ENCODE measurements at regions of chr5 and their contacts with region 1.

Region 1: DNA sequence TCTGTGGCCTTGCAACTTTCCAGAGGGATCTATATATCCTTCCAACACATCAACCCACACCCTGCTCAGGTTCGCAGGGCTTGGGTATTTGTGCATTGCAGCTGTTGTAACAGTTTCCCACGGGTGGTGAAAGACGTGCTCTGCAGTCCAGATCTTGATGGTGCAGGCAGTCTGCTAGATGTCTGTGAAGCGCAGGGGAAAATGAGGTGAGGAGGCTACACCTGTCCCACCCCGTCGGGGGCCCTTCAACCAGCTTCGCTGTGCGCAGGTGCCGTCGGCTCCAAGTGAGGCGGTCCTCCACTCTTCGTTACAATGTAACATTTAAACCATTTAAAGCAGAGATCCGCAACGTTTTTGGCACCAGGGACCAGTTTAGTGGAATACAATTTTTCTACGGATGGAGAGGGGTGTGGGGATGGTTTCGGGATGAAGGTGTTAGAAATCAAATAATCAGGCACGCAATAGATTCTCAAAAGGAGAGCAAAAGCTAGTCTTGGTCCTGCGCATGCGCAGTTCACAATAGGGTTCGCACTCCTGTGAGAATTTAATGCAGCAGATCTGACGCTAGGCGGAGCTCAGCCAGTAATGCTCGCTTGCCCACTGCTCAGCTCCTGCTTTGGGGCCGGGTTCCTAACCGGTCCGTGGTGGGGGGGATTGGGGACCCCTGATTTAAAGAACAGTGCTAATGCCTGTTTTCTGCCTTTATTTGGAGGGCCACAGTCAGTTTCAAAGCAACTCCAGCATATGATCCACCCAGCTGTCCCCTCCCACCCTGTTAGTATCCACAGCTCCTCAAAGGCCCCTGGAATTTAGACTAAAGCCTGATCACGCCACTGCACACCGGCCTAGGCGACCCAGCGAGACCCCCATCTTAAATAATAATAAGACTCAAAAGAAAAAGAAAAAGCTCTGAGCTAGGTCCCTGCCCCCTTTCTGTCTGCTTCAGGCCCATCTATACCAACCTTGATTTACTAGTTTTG is 97.1 kb upstream of the SELENOP start:
- DNase-seq: peak; percentile 87
- H3K4me3 ChIP-seq: peak overlapping the region; percentile 31 to 75 (median 41)
- H3K27ac ChIP-seq: no peak overlapping the region
- H3K4me1 ChIP-seq: peaks cover 5% of the 10 kb centered on the region
- H3K27me3 ChIP-seq: peaks cover 23 to 34% of the 10 kb centered on the region in 2 experiments
- CTCF ChIP-seq: peak; percentile 75 to 78
- POLR2A ChIP-seq: no peak

Region 2: GRCh38 chr5:42923710-42924109 is 14.9 kb after region 1 on chr5:
- CTCF ChIA-PET with region 1: interaction called, 10 read pairs
- POLR2A ChIA-PET with region 1: no interaction called
- dilution Hi-C with region 1: no loop called
- intact Hi-C with region 1: no loop called
- DNase-seq: no peak
- H3K4me3 ChIP-seq: no peak overlapping the region
- H3K27ac ChIP-seq: no peak overlapping the region
- H3K4me1 ChIP-seq: no peaks in the 10 kb centered on the region
- H3K27me3 ChIP-seq: peaks cover 2 to 4% of the 10 kb centered on the region in 2 experiments
- CTCF ChIP-seq: no peak
- POLR2A ChIP-seq: no peak

Region 3: GRCh38 chr5:42994246-42995151 is 85.7 kb after region 1 on chr5:
- CTCF ChIA-PET with region 1: interaction called, 175 read pairs
- POLR2A ChIA-PET with region 1: interaction called, 3 read pairs
- dilution Hi-C with region 1: no loop called
- intact Hi-C with region 1: loop called (anchors 1 kb)
- DNase-seq: peak; percentile 96
- H3K4me3 ChIP-seq: peak overlapping the region; percentile 59 to 94 (median 61)
- H3K27ac ChIP-seq: peak overlapping the region; percentile 98
- H3K4me1 ChIP-seq: peaks cover 30% of the 10 kb centered on the region
- H3K27me3 ChIP-seq: no peaks in the 10 kb centered on the region
- CTCF ChIP-seq: peak; percentile 85 to 86
- POLR2A ChIP-seq: peak; percentile 52

Region 4: DNA sequence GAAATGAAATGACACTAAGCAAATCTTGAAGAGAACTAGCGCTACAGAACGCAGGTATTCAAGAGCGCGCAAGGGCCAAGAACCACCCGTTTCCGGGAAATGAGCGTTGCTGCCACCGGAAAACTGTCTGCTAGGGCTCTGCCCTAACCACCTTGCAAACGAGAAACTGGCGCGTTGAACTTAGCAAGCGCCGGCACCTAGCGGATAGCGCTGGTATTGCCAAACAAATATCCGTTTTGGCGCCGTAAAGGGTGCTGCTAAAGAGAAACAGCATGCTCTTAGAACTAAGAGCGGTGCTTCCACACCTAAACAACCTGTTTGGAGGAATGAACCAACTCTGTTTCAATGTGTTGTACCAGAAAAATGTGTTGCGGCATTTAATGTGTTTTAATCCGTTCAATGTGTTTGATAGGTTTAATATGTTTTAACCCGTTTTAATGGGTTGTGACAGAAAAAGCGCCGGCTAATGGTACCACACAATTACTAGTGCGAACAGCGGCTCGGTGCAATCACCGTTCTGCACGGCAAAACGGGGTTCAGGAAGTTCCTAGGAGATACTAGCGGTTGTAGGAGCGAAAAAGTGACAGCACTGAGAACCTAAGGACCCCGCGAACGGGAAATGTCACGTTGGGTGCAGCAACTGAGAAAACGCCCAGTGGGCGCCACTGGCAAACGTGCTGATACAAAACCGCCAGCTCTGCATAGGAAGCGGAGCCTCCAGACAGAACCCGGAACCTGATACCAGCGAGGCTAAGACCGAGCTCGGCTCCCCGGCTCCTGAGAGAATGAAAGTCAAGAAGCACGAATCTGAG is 131.7 kb after region 1 on chr5 and contains the start of gene ANXA2R:
- CTCF ChIA-PET with region 1: interaction called, 140 read pairs
- POLR2A ChIA-PET with region 1: interaction called, 6 read pairs
- dilution Hi-C with region 1: no loop called
- intact Hi-C with region 1: loop called (anchors 1 kb)
- DNase-seq: peak; percentile 97
- H3K4me3 ChIP-seq: peak within 1 kb of the TSS; percentile 51 to 87 (median 54)
- H3K27ac ChIP-seq: peak within 1 kb of the TSS; percentile 77
- H3K4me1 ChIP-seq: peaks cover 30% of the 10 kb centered on the region
- H3K27me3 ChIP-seq: no peaks in the 10 kb centered on the region
- CTCF ChIP-seq: peak; percentile 81 to 86
- POLR2A ChIP-seq: no peak
- total RNA-seq, gene ANXA2R: 6.6 and 8.1 TPM in 2 replicates

Region 5: DNA sequence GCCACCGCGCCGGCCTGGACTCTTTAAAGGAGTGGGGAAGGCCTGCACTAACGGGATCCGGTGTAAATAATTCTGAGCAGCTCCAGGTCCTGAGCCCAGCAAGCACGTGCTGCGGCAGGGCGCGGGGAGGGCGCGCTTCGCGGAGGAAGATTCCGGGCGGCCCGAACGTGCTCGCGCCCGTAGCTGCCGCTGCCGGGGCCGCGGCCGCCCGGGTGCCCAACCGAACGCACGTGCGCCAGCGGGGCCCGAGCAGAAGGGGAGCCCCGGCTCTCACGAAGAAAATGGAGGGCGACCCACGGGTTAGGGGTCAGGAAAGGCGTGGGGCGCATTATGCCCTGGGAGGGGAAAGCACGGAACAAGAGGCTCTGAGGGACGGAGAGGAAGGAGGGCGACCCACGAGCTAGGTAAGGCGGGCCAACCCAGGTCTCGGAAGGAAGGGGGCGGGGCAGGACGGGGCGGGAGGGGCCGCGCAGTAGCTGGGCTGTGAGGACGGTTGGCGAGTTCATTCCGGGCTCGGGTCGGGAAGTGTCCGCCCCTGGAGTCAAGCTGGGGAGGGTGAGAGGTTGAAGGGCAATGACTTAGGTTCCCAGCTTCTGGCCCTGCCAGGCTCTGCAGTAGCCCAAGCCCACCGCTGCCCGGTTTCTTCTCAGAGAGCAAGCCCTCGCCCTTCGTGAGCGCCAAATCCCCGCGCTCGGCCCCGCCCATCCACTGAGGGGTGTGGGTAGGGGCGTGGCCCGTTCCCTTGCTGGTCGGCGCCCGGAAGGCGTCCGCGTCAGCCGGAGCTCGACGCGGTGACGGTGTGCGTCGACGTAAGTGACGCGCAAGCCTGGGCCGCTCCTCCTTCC is 212.1 kb after region 1 on chr5 and contains the start of gene ZNF131:
- CTCF ChIA-PET with region 1: interaction called, 17 read pairs
- POLR2A ChIA-PET with region 1: interaction called, 4 read pairs
- dilution Hi-C with region 1: no loop called
- intact Hi-C with region 1: loop called (anchors 1 kb)
- DNase-seq: peak; percentile 97
- H3K4me3 ChIP-seq: peak within 1 kb of the TSS; percentile 73 to 90 (median 79)
- H3K27ac ChIP-seq: peak within 1 kb of the TSS; percentile 81
- H3K4me1 ChIP-seq: peaks cover 17% of the 10 kb centered on the region
- H3K27me3 ChIP-seq: no peaks in the 10 kb centered on the region
- CTCF ChIP-seq: no peak
- POLR2A ChIP-seq: peak; percentile 94
- total RNA-seq, gene ZNF131: 30.1 and 31.2 TPM in 2 replicates

Measured in endothelial cell of umbilical vein (primary cell).